Activated B cell treated with CpG ODN at 0.5 μM for 24 hours (primary cell): ENCODE measurements at regions of chr7 and their contacts with region 1.

Region 1: DNA sequence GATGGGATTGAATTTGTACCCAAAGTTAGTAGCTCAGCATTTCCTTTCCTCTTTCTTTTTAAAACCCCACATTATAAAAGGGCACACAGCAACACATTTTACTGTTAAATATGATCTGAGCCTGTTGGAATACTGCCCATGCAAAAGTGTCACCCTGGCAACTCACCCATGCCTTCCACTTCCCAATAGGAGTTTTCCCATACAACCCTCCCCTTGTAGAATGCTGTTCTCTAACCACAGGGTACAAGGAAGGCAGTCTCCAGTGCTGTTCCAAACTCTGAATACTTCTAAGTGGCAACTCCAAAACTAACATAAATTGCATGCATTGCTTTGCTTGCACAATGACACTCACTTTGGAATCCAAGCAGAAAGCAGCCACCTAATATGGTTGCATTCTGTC is 60.8 kb downstream of the NRCAM start:
- DNase-seq: no peak
- ATAC-seq: no peak
- H3K4me3 Mint-ChIP-seq: no peak overlapping the region
- H3K27ac Mint-ChIP-seq: no peak overlapping the region
- H3K4me1 Mint-ChIP-seq: no peaks in the 10 kb centered on the region
- H3K27me3 Mint-ChIP-seq: peaks cover 15% of the 10 kb centered on the region
- CTCF ChIP-seq: no peak

Region 2: DNA sequence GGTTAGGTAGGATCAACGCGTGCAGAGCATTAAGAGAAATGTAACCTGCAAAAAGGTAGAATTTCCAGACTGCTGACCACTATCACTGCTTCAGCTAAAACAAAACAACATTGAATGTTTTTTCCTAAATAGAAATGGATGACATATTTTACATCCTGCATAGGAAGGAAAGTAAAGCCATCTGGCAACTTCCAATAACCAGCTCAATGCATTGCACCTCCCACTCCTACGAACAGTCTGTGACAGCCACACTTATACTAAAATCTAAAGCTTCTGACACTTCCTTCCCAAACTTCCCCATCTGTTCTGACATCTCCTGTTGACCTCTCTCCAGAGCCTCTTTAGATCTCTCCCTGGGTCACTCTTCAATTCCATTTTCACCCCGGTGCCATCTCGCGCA is 13.7 kb after region 1 on chr7:
- CTCF ChIA-PET with region 1: no interaction called
- POLR2A ChIA-PET with region 1: no interaction called
- intact Hi-C with region 1: loop called (anchors 1 kb)
- DNase-seq: no peak
- ATAC-seq: no peak
- H3K4me3 Mint-ChIP-seq: no peak overlapping the region
- H3K27ac Mint-ChIP-seq: no peak overlapping the region
- H3K4me1 Mint-ChIP-seq: peaks cover 10% of the 10 kb centered on the region
- H3K27me3 Mint-ChIP-seq: no peaks in the 10 kb centered on the region
- CTCF ChIP-seq: no peak